ENCODE measurements at regions of chr2 and their contacts with region 1.

Region 1: GRCh38 chr2:218979846-218980734 is 4.9 kb downstream of the FEV start:
- DNase-seq: peak; percentile 87
- ATAC-seq: peak; percentile 94
- H3K4me3 Mint-ChIP-seq: no peak overlapping the region
- H3K27ac Mint-ChIP-seq: no peak overlapping the region
- H3K4me1 Mint-ChIP-seq: peaks cover 10% of the 10 kb centered on the region
- H3K27me3 Mint-ChIP-seq: peaks cover 83% of the 10 kb centered on the region

Region 2: DNA sequence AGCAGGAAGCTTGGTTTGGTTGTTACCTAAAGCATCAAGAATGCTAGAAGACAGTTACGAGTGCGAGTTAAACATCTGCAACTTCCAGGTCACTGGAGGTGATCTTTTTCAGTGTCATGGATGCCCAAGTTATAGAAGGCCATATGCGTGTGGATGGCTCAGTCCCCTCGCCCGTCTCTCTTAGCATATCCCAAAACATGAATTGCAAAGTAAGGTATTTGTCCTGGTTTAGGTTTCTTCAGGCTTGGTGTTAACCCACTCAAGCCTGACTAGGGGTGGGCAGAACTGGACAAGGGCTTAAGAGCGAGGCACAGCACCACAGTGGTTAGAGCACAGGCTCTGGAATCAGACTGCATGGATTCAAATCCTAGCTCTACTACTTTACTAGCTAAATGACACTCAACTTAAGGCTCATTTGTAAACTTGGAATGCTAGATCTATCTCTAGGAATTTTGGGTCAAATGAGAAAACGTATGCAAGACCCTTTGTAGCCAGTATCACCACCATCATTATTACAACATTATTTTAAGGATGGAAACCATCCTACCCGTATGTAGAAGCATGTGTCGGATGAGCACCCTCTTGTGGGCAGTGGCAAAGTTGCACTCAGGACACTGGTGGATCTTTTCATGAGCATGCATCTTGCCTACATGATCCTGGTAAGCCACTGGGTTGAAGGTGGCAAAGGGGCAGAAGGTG is 331.9 kb before region 1 on chr2:
- CTCF ChIA-PET with region 1: no interaction called
- DNase-seq: peak; percentile 72
- ATAC-seq: peak; percentile 81
- H3K4me3 Mint-ChIP-seq: no peak overlapping the region
- H3K27ac Mint-ChIP-seq: no peak overlapping the region
- H3K4me1 Mint-ChIP-seq: peaks cover 4% of the 10 kb centered on the region
- H3K27me3 Mint-ChIP-seq: no peaks in the 10 kb centered on the region

Region 3: DNA sequence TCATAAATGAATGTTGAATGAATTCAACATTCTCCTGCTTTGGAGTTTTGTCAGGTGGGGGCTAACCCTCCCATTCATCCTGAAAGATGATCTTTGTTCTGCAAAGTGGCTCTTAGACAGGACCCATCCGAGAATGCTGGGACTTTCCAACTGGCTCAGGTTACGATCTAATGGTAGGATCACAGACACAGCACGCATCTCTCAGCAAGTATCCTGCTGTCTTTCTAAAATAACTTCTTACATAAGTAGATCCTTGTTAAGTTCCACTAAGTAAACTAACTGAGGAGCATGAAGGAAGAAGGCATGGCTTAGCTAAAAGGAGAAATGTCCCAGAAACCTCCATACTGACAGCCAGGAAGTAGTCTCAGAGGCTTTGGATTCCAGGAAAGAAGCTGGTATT is 174.5 kb before region 1 on chr2:
- CTCF ChIA-PET with region 1: no interaction called
- DNase-seq: no peak
- ATAC-seq: no peak
- H3K4me3 Mint-ChIP-seq: no peak overlapping the region
- H3K27ac Mint-ChIP-seq: no peak overlapping the region
- H3K4me1 Mint-ChIP-seq: peaks cover 10% of the 10 kb centered on the region
- H3K27me3 Mint-ChIP-seq: peaks cover 37% of the 10 kb centered on the region

Region 4: DNA sequence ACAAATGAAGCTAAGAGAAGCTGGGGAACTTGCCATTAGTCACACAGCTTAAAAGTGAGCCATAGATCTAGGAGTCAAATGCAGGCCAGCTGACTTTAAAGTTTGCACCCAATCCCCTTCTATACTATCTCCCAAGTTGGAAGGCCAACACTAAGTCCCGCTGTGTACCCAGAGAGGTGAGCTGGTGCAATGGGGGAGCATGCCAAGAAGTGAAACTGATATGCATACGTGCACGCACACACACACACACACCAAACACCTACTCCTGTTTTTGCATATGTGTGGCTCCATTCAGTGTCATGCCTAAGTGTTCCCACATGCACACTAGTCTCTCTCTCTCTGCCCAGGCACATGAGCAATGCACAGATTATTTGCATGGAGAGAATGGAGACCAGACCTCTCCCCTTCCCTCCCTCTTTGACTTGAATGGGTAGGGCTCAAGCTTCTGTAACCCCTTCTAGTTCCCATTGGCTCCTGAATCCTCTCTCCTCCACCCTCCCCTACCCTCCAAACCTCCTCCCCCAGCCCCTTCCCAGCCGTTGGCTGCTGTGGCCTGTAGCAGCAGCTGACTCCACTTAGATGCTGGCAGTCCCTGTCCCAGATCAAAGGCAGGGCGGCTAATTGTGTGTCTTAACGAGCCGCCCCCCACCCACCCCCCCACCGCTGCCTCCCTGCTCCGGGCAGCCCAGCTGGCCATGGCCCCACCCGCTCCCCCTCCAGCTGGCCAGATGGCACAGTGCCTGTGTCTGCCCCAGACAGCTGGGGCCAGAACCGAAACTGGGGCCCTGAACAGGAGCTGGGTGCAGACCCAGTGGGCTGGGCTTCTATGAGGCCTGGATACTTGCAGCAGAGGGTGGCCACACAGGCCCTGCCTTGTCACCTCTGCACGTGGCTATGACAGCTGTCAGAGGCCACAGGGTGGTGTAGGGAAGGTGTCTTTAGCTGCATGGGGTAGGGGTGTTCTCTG is 93.8 kb before region 1 on chr2:
- CTCF ChIA-PET with region 1: interaction called, 10 read pairs
- DNase-seq: no peak
- ATAC-seq: no peak
- H3K4me3 Mint-ChIP-seq: no peak overlapping the region
- H3K27ac Mint-ChIP-seq: no peak overlapping the region
- H3K4me1 Mint-ChIP-seq: peaks cover 5% of the 10 kb centered on the region
- H3K27me3 Mint-ChIP-seq: peaks cover 65% of the 10 kb centered on the region

Region 5: GRCh38 chr2:218959141-218959731 is 20.9 kb before region 1 on chr2 and contains the start of gene CDK5R2:
- CTCF ChIA-PET with region 1: interaction called, 17 read pairs
- DNase-seq: peak; percentile 87
- ATAC-seq: peak; percentile 98
- H3K4me3 Mint-ChIP-seq: peak within 1 kb of the TSS; percentile 59
- H3K27ac Mint-ChIP-seq: no peak within 1 kb of the TSS
- H3K4me1 Mint-ChIP-seq: peaks cover 12% of the 10 kb centered on the region
- H3K27me3 Mint-ChIP-seq: peaks cover 79% of the 10 kb centered on the region
- total RNA-seq, gene CDK5R2: not detected

Region 6: GRCh38 chr2:219002395-219003266 is 22.5 kb after region 1 on chr2:
- CTCF ChIA-PET with region 1: interaction called, 14 read pairs
- DNase-seq: peak; percentile 56
- ATAC-seq: no peak
- H3K4me3 Mint-ChIP-seq: no peak overlapping the region
- H3K27ac Mint-ChIP-seq: no peak overlapping the region
- H3K4me1 Mint-ChIP-seq: peaks cover 6% of the 10 kb centered on the region
- H3K27me3 Mint-ChIP-seq: peaks cover 74% of the 10 kb centered on the region

Region 7: GRCh38 chr2:219155054-219155644 is 175.1 kb after region 1 on chr2:
- CTCF ChIA-PET with region 1: interaction called, 13 read pairs
- DNase-seq: no peak
- ATAC-seq: no peak
- H3K4me3 Mint-ChIP-seq: no peak overlapping the region
- H3K27ac Mint-ChIP-seq: no peak overlapping the region
- H3K4me1 Mint-ChIP-seq: peaks cover 9% of the 10 kb centered on the region
- H3K27me3 Mint-ChIP-seq: no peaks in the 10 kb centered on the region